Right ventricle myocardium inferior (tissue), 1 donor: ENCODE measurements at regions of chr1 and their contacts with region 1.

Region 1: DNA sequence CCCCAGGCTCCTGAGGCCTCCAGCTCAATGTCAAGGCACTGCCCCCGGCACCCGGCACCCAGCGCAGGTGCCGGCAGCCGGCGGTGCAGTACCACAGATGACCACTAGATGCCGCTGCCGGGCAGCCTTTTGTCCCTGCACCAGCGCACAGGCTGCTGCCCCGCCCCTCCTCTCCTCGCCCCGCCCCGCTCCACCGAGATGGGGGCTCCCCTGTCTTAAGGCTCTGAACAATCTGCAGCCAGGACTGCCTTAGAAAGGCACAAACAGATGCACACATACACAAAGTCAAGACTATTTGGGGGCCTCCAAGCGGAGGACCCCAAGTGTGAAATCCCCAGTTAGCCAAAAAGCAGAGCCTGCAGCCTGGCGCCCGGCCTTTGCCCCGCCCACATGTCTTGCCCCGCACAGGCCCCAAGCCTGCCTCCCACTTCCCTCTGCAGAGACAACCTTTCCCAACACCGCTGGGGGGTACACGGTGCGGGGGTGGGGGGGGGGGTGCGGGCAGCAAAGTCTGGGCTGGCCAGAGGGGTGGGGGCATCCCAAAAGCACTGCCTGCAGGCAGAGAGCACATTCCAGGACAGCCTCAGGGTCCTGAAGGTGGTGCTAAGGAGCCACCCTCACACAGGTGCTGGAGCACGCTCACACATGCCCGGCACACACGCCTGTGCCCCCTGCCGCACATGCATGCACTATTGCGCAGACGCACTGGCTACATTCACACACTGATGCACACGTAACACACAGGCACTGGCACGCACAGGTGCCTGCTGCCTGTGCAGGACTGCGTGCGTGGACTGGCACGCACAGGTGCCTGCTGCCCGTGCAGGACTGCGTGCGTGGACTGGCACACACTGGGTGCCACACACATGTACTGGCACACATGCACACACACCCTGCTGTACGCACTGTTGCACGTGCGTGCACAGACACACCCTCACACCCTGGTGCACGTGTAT is 37.1 kb downstream of the ARHGEF16 start:
- DNase-seq: peak; percentile 87
- ATAC-seq: peak; percentile 83

Region 2: DNA sequence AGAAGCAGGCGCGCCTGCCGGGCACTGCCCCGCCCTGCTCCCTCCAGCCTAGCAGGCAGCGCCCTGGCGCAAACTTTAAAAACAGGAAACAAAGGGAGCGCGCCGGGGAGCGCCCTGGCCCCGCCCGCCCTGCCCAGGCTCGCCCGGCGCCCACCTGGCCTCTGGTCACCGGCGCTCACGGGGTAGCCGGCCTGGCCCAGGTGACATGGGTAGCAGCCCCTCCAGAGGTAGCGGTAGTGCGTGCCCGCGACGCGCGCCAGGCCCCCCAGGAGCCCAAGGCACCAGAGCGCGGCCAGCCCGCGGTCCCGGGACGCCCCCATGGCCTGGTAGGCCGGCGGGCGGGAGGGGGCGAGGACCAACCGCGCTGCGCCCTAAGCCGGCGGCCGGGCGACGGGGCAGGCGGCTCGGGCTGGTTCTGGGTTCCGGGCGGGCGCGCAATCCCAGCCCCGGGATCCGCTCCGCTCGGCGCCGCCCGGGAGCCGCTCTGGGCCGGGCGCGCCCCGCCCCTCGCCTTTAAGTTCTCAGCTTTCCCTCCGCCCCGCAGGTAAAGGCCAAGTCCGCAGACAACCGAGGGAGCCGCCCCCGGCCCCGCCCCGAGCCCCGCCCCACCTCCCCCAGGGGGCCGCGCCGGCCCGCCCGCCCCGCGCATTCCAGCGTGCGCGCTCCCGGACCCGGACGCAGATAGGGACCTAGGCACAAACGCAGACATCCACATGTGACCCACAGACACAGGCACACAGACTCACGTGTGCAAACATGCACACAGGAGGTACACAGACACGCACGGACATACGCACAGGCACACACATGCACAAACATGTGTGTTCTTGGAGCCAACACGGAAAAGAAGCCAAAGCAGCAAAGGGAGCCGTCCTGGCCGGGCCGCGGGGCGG is 39.6 kb after region 1 on chr1:
- intact Hi-C with region 1: no loop called
- DNase-seq: peak; percentile 88
- ATAC-seq: peak; percentile 81

Region 3: GRCh38 chr1:3564921-3565827 is 73.6 kb after region 1 on chr1:
- intact Hi-C with region 1: loop called (anchors 5 kb)
- DNase-seq: no peak
- ATAC-seq: no peak

Region 4: DNA sequence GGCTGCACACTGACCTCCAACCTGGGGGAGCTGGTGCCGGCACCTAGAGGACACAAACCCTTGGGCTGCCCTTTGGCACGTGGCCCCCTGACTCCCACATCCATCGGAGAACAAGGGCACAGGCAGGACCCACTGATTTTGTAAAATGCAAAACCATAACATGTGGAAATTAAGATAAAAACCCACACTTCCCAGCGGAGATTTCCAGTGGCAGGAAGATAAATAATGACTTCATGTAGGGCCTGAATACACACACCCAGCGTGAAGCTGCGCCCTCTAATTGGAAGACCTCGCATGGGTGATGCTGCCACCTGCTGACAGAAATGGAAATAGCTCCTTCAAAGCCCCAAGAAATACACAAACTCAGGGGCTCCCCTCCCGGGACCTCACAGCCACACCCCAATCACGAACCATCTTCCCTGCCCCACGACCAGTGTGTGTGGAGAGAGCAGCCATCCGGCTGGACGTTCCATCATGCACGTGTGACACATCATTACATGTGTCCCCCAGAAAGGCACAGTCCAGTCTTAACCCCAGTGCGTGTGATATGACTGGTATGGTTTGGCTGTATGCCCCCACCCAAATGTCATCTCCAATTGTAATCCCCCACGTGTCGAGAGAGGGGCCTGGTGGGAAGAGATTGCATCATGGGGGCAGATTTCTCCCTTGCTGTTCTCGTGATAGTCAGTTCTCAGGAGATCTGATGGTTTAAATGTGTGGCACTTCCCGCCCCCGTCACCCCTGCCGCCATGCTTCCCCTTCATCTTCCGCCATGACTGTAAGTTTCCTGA is 127.5 kb after region 1 on chr1:
- intact Hi-C with region 1: loop called (anchors 1 kb)
- DNase-seq: no peak
- ATAC-seq: peak; percentile 64

Region 5: DNA sequence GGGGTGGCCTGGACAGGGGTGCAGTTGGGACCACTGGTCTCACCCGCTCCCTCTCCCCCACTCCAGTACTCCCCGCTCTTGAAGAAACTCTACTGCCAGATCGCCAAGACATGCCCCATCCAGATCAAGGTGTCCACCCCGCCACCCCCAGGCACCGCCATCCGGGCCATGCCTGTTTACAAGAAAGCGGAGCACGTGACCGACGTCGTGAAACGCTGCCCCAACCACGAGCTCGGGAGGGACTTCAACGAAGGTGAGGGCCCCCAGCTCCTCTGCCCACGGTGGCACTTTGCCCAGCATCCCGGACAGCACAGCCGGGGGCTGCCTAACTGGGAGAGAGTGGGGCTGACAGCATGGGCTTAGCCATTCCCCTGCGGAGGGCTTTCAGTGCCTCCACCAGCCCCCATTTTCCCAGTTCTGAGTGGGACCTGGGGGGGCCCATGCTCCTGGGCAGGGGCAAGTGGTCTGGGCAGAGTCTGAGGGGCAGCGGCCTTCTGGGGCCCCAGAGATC is 230.4 kb after region 1 on chr1:
- intact Hi-C with region 1: loop called (anchors 5 kb)
- DNase-seq: no peak
- ATAC-seq: no peak